Mammary epithelial cell (primary cell): ENCODE measurements at regions of chr6 and their contacts with region 1.

Region 1: DNA sequence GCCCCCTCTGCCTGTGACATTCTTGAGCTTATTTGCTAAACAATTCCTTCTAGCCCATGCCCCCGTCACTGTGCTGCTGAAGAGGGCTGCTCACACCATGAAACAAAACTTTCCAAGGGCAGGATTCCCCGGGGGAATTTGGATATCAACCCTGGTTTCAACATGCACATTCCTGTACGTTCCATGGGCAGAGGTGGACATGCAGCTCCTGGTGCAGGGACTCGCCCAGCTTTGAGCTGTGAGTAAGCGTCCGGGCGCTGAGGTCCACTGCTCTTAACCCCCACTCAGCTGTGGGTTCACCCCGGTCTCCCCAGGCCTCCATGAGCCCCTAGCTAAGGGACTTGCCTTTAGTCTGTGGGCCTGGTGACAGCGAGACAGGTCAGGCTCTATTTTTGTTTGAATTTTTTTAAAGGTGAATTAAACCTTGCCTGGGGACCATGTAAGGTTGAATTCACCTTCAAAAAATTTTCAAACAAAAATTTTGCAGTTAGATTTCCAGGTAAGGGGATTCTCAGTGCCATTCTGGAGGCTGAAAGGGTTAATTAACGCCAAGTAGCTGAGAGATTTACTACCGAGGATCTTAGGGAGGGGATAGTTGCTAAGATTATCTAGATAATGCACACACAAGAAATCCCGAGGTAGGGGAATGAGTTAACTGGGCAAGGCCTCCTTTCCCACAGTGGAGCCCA is 70.3 kb upstream of the SLC22A23 start:
- DNase-seq: peak; percentile 96
- H3K4me3 ChIP-seq: no peak overlapping the region
- H3K27ac ChIP-seq: peak overlapping the region; percentile 78
- H3K4me1 ChIP-seq: peaks cover 51% of the 10 kb centered on the region
- H3K27me3 ChIP-seq: no peaks in the 10 kb centered on the region
- CTCF ChIP-seq: no peak

Region 2: DNA sequence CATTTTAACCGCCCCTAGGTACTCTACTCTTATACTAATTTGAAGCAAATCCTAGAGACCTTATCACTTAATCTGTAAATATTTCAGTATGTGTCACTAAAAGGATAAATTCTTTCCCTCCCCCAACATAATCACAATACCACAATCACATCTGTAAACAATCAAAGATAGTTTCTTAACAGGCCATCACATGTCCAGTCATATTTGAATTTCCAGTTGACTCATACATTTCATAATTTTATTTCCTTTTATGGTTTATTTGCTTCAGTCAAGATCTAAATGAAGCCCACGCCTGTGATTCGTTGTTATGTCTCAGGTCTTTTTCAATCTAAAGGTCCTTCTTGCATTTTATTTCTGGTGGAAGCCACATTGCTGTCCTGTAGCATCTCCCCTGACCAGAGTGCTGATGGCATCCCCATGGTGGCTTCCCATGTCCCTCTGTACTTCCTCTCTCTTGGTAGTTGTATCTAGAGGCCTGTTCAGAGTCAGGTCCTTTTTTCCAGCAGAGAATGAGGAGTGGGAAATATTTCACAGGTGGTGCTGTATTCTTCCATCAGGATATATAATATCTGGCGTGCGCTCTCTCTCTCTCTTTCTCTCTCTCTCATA is 58.3 kb after region 1 on chr6:
- CTCF ChIA-PET with region 1: no interaction called
- dilution Hi-C with region 1: loop called (anchors 5 kb)
- in situ Hi-C with region 1: no loop called
- intact Hi-C with region 1: loop called (anchors 2 kb)
- DNase-seq: peak; percentile 86
- H3K4me3 ChIP-seq: no peak overlapping the region
- H3K27ac ChIP-seq: peak overlapping the region; percentile 48
- H3K4me1 ChIP-seq: peaks cover 13% of the 10 kb centered on the region
- H3K27me3 ChIP-seq: no peaks in the 10 kb centered on the region
- CTCF ChIP-seq: no peak